ENCODE measurements at regions of chr21 and their contacts with region 1.

Region 1: DNA sequence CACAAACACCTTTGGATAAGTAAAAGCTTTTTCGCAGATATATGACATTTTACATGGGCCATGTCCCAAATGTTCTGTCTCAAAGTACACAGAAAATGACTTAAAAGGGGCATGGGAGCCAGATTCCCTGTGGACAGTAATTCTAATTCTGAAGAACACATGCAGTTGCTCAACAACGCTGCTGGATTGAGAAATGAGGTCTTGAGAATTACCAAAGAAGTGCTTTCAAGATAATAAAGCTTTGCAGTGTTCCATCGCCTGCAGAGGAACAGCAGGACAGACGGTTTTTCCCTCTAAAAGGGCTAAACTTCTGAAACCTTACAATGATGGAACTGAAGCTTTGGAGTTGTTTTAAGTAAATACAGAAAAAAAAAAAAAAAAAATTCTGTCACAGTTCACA is 55.3 kb upstream of the HSPA13 start:
- DNase-seq: no peak
- CTCF ChIP-seq: no peak

Region 2: DNA sequence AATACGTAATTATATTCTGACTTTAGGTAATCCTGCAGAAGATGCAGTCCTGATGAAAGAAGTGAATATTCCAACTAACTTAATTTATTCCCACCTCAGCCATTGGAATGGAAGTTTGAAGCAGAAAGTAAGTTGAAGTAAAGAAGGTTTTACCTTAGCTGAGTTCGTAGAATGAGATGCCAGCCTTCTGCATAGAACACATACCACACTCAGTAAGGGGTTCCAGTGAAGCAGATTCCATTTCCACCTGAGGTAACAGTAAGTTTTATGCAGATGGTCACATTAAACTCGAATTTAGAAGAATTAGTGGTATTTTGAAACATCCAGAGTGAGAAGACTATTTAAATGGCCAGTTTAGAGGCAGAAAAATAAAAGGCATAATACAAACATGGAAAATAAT is 202.0 kb before region 1 on chr21:
- in situ Hi-C with region 1: no loop called
- DNase-seq: no peak
- CTCF ChIP-seq: no peak

Region 3: DNA sequence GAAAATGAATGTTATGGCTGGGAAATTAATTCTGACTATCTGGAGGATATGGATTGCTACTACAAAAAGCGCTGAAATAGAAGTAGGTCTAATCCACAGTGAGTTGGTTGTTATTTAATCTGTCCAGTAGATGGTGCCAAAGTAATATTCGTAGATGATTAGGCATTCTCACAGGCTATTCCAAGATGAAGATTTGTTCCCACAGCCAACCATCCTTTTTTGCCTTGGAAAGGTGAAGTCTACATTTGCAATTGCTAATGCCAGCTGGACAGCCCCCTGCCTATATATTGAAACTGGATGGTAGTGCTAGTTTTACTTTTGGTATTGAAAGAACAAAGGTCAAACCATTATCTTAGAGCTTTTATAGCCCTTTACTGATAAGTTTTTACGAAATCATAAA is 178.5 kb before region 1 on chr21:
- in situ Hi-C with region 1: no loop called
- DNase-seq: peak; percentile 31
- CTCF ChIP-seq: peak; percentile 50

Region 4: DNA sequence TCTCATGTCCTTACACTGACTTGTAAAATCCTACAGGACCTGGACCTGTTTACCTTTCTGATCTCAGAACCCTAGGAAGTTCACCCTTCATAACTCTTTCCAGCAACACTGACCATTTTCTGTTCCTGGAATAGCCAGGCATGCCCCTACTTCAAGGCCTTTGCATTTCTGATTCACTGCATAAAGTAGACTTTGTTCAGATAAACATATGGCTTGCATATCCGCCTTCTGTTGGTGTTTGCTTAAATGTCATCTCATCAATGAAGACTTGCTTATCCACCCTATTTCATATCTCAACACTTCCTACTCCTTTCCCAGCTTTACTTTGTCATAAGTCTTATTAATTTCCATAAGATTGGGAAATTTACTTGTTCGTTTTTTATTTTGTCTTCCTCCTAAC is 112.6 kb before region 1 on chr21:
- in situ Hi-C with region 1: loop called (anchors 25 kb)
- DNase-seq: no peak
- CTCF ChIP-seq: no peak

Region 5: DNA sequence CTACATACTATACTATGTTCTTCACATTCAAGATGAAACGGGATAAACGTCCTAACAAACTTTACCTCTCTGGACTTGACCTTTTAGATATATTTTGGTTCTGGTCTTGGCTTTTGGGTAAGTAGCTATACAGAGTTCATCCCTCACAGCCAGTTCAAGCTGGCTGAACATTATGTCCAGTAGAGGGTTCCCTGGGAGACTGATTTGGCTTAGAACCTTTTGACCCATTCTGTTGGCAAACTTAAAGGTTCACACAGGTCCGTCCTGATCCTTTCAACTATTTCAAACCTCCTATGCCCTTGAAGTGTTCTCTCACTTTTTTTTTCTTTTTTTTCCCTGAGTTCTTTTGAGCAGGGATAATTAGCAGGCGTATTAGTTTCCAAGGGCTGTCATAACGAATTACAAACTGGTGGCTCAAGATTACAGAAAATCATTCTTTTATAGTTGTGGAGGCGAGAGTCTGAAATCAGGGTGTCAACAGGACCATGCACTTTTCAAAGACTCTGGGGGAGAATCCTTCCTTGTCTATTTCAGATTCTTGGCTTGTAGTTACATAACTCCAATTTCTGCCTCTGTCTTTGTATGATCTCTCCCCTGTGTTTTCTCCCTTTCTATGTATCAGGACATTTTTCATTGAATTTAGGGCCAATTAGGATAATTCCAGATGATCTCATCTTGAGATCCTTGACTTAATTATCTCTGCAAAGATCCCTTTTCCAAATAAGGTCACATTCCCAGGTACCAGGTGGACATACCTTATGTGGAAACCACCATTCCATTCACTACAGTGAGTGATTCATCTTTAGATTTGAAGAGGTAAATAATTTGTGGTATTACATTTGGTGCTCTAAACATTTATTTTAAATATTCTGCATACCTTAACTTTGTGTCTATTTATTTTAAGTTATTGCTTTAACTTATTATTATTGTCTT is 1034.2 kb after region 1 on chr21:
- in situ Hi-C with region 1: loop called (anchors 10 kb)
- DNase-seq: no peak
- CTCF ChIP-seq: no peak